ENCODE measurements at regions of chr2 and their contacts with region 1.

Region 1: GRCh38 chr2:241102239-241102803 is at the start of gene MTERF4:
- DNase-seq: peak; percentile 87
- H3K4me3 ChIP-seq: peak within 1 kb of the TSS; percentile 93 to 95 (median 94)
- H3K27ac ChIP-seq: peak within 1 kb of the TSS; percentile 79
- H3K4me1 ChIP-seq: peaks cover 15% of the 10 kb centered on the region
- H3K27me3 ChIP-seq: no peaks in the 10 kb centered on the region
- CTCF ChIP-seq: no peak
- total RNA-seq, gene MTERF4: 18.5 to 21.7 TPM

Region 2: GRCh38 chr2:241149925-241150659 is 47.8 kb after region 1 on chr2 and contains the start of gene PPP1R7:
- CTCF ChIA-PET with region 1: no interaction called
- dilution Hi-C with region 1: no loop called
- in situ Hi-C with region 1: no loop called
- intact Hi-C with region 1: loop called (anchors 1 kb)
- DNase-seq: peak; percentile 94
- H3K4me3 ChIP-seq: peak within 1 kb of the TSS; percentile 69 to 85 (median 80)
- H3K27ac ChIP-seq: peak within 1 kb of the TSS; percentile 56
- H3K4me1 ChIP-seq: peaks cover 22% of the 10 kb centered on the region
- H3K27me3 ChIP-seq: no peaks in the 10 kb centered on the region
- CTCF ChIP-seq: no peak
- total RNA-seq, gene PPP1R7: 39.2 to 66.5 TPM

Measured in mammary epithelial cell (primary cell).